ENCODE measurements at regions of chr20 and their contacts with region 1.

Region 1: GRCh38 chr20:31355981-31356380 is 12.4 kb upstream of the DEFB118 start:
- DNase-seq: no peak
- ATAC-seq: no peak
- H3K4me3 ChIP-seq: no peak overlapping the region
- H3K27ac ChIP-seq: no peak overlapping the region
- H3K4me1 ChIP-seq: no peaks in the 10 kb centered on the region
- H3K27me3 ChIP-seq: no peaks in the 10 kb centered on the region
- CTCF ChIP-seq: no peak
- EP300 ChIP-seq: no peak
- POLR2A ChIP-seq: no peak
- RAD21 ChIP-seq: no peak

Region 2: GRCh38 chr20:31403886-31404285 is 47.9 kb after region 1 on chr20:
- CTCF ChIA-PET with region 1: no interaction called
- POLR2A ChIA-PET with region 1: no interaction called
- RAD21 ChIA-PET with region 1: no interaction called
- SMC1A ChIA-PET with region 1: no interaction called
- in situ Hi-C with region 1: loop called (anchors 5 kb)
- intact Hi-C with region 1: no loop called
- DNase-seq: no peak
- ATAC-seq: no peak
- H3K4me3 ChIP-seq: no peak overlapping the region
- H3K27ac ChIP-seq: no peak overlapping the region
- H3K4me1 ChIP-seq: no peaks in the 10 kb centered on the region
- H3K27me3 ChIP-seq: no peaks in the 10 kb centered on the region
- CTCF ChIP-seq: no peak
- EP300 ChIP-seq: no peak
- POLR2A ChIP-seq: no peak
- RAD21 ChIP-seq: no peak

Region 3: GRCh38 chr20:31440012-31441002 is 84.3 kb after region 1 on chr20 and contains the start of gene DEFB123:
- CTCF ChIA-PET with region 1: no interaction called
- POLR2A ChIA-PET with region 1: no interaction called
- RAD21 ChIA-PET with region 1: no interaction called
- SMC1A ChIA-PET with region 1: no interaction called
- in situ Hi-C with region 1: no loop called
- intact Hi-C with region 1: no loop called
- DNase-seq: no peak
- ATAC-seq: no peak
- H3K4me3 ChIP-seq: no peak within 1 kb of the TSS
- H3K27ac ChIP-seq: no peak within 1 kb of the TSS
- H3K4me1 ChIP-seq: no peaks in the 10 kb centered on the region
- H3K27me3 ChIP-seq: no peaks in the 10 kb centered on the region; a peak in 1 of 4 replicates
- CTCF ChIP-seq: peak in 2 of 3 experiments; percentile 35 to 41; a peak in 3 of 6 replicates
- EP300 ChIP-seq: no peak
- POLR2A ChIP-seq: no peak
- RAD21 ChIP-seq: no peak
- polyA plus RNA-seq, gene DEFB123: not detected